Left ventricle myocardium superior (tissue), 1 donor: ENCODE measurements at regions of chr6 and their contacts with region 1.

Region 1: GRCh38 chr6:153804755-153805330 is 234.2 kb upstream of the OPRM1 start:
- DNase-seq: no peak
- ATAC-seq: no peak

Region 2: DNA sequence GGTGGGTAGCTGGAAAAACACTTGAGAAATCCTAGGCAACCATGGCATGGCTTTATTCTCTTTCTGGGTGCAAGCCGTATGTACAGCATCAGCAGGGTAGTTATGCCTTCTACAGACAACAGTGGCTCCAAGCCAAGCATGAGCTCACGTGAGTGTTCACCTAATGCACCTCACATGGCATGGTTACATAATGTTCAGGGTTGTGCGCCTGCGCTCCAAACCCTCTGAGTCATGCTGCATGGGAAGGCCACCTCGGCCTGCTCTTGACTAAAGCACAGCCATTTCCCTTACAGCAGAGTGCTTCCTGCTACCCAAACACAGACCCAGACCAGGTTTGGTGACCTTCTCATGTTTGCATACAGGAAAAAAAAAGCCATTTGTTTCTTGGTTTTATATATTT is 958.0 kb before region 1 on chr6:
- intact Hi-C with region 1: loop called (anchors 10 kb)
- DNase-seq: no peak
- ATAC-seq: no peak